ENCODE measurements at regions of chr21 and their contacts with region 1.

Region 1: GRCh38 chr21:35066824-35067223 is 17.7 kb upstream of the RUNX1 start:
- DNase-seq: no peak
- ATAC-seq: no peak
- H3K4me3 ChIP-seq: no peak overlapping the region
- H3K27ac ChIP-seq: no peak overlapping the region
- H3K4me1 ChIP-seq: peaks cover 18% of the 10 kb centered on the region
- H3K27me3 ChIP-seq: no peaks in the 10 kb centered on the region
- CTCF ChIP-seq: no peak

Region 2: GRCh38 chr21:34956416-34957316 is 110.2 kb before region 1 on chr21:
- CTCF ChIA-PET with region 1: no interaction called
- POLR2A ChIA-PET with region 1: interaction called, 27 read pairs
- intact Hi-C with region 1: no loop called
- DNase-seq: peak; percentile 34
- ATAC-seq: no peak; the same call in 1 of the 2 replicates
- H3K4me3 ChIP-seq: no peak overlapping the region
- H3K27ac ChIP-seq: no peak overlapping the region
- H3K4me1 ChIP-seq: peaks cover 8% of the 10 kb centered on the region
- H3K27me3 ChIP-seq: no peaks in the 10 kb centered on the region
- CTCF ChIP-seq: no peak

Region 3: DNA sequence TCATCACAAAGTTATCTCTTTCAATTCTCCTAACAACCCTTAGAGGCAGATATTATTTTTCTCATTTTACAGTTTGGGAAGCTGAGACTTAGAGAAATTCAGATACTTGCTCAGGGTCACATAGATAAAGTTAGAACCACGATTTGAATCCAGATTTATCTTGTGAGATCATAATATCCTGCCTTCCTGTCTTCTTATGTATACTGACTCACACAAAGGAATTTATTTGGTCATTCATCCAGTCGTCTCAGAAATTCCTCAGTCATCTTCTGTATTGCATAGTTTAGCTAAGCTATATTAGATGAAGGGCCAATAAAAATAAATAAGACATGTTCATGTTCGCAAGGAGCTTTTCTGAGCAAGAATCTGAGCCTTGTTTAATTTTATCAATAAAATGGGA is 18.0 kb after region 1 on chr21:
- CTCF ChIA-PET with region 1: no interaction called
- POLR2A ChIA-PET with region 1: no interaction called
- intact Hi-C with region 1: no loop called
- DNase-seq: peak; percentile 95
- ATAC-seq: peak; percentile 82
- H3K4me3 ChIP-seq: no peak overlapping the region
- H3K27ac ChIP-seq: peak overlapping the region; percentile 71
- H3K4me1 ChIP-seq: peaks cover 49% of the 10 kb centered on the region
- H3K27me3 ChIP-seq: no peaks in the 10 kb centered on the region
- CTCF ChIP-seq: no peak

Measured in PC-3 (cell line).